ENCODE measurements at regions of chr2 and their contacts with region 1.

Region 1: DNA sequence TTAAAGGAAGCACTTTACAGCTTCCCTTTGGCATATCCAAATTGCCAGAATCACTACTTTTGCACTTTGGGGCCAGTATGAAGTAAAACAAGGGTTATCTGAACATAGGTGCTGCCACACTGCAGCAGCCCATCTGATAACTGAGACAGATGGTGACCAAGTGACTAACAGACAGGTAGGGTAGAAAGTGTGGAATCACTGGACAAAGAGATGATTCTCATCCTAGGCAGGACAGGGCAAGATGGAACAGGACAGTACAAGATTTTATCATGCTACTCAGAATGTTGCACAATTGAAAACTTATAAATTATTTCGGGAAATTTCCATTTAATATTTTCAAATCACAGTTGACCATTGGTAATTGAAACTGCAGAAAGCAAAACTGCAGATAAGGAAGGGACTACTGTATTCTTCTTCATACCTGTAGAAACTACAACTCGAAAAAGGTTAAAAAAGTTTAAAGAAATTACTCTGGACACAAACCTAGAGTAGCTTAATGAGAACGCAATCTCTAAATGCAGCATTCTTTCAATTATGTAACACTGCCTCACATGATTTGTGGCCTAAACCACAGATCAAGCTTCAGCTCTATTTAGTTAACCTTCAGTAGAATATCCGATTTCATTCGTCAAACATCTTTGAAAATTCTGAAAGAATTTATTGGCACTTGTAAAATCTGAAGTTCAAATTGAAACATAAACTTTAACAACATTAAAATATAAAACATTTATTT is 31.4 kb downstream of the HEATR5B start:
- DNase-seq: no peak
- H3K4me3 ChIP-seq: no peak overlapping the region
- H3K27ac ChIP-seq: no peak overlapping the region
- H3K4me1 ChIP-seq: no peaks in the 10 kb centered on the region
- H3K27me3 ChIP-seq: no peaks in the 10 kb centered on the region
- CTCF ChIP-seq: no peak

Region 2: GRCh38 chr2:37070933-37071332 is 18.2 kb after region 1 on chr2:
- CTCF ChIA-PET with region 1: no interaction called
- POLR2A ChIA-PET with region 1: no interaction called
- intact Hi-C with region 1: loop called (anchors 2 kb)
- DNase-seq: no peak
- H3K4me3 ChIP-seq: no peak overlapping the region
- H3K27ac ChIP-seq: no peak overlapping the region
- H3K4me1 ChIP-seq: no peaks in the 10 kb centered on the region
- H3K27me3 ChIP-seq: no peaks in the 10 kb centered on the region
- CTCF ChIP-seq: no peak

Region 3: GRCh38 chr2:37090019-37090477 is 37.3 kb after region 1 on chr2:
- CTCF ChIA-PET with region 1: no interaction called
- POLR2A ChIA-PET with region 1: interaction called, 12 read pairs
- intact Hi-C with region 1: no loop called
- DNase-seq: no peak
- H3K4me3 ChIP-seq: no peak overlapping the region
- H3K27ac ChIP-seq: no peak overlapping the region
- H3K4me1 ChIP-seq: no peaks in the 10 kb centered on the region
- H3K27me3 ChIP-seq: no peaks in the 10 kb centered on the region
- CTCF ChIP-seq: no peak

Measured in A673 (cell line).